Naive thymus-derived CD4-positive, alpha-beta T cell (primary cell): ENCODE measurements at regions of chr3 and their contacts with region 1.

Region 1: GRCh38 chr3:5194341-5195159 is 7.0 kb downstream of the EDEM1 start:
- DNase-seq: peak in 1 of 9 donors; percentile 69
- ATAC-seq: peak; percentile 54
- H3K4me3 ChIP-seq: no peak overlapping the region
- H3K4me3 Mint-ChIP-seq: peak overlapping the region; percentile 2 to 78 (median 46)
- H3K27ac ChIP-seq: peak overlapping the region; percentile 64
- H3K27ac Mint-ChIP-seq: peak overlapping the region; percentile 63 to 96 (median 93)
- H3K4me1 ChIP-seq: peaks cover 76 to 88% of the 10 kb centered on the region in 2 donors
- H3K4me1 Mint-ChIP-seq: peaks cover 73 to 90% (median 87%) of the 10 kb centered on the region in 7 donors
- H3K27me3 ChIP-seq: no peaks in the 10 kb centered on the region
- H3K27me3 Mint-ChIP-seq: no peaks in the 10 kb centered on the region

Region 2: DNA sequence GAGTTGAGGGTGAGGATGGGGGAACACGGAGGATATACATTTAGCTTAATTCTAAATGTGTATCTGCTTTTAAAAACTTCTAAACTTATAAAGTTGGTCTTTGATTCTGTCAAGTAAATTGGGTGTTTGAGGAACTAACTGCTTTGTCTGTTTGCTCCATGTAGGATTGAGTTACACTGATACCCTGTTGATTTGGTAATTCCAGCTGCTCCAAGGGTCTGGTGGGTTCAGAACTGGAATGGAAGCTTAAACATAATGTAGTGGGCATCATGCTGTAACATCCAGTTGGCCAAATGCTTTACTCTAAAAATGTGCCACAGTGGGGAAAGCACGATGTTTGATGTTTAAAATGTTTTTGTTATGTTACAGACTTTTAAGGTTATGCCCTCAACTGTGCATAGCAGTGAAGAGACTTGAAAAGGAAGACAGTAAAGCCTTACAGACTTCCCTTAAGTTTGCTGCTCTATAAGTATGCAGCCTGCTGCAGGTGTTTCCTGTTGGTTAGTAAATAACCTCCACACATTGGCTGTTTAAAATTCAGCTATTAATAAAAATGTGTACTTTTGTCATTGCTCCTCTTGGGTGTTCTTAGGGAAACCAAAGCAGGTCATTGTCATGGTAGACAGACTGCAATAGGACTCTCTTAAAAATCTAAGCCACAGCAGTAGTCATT is 12.9 kb before region 1 on chr3:
- CTCF ChIA-PET with region 1: interaction called, 19 read pairs
- POLR2A ChIA-PET with region 1: interaction called, 117 read pairs
- intact Hi-C with region 1: no loop called
- DNase-seq: no peak
- ATAC-seq: peak; percentile 59
- H3K4me3 ChIP-seq: no peak overlapping the region
- H3K4me3 Mint-ChIP-seq: peak overlapping the region in 1 of 10 donors; percentile 25
- H3K27ac ChIP-seq: no peak overlapping the region
- H3K27ac Mint-ChIP-seq: peak overlapping the region in 7 of 9 donors; percentile 55 to 89 (median 73)
- H3K4me1 ChIP-seq: peaks cover 0 to 8% of the 10 kb centered on the region in 2 donors
- H3K4me1 Mint-ChIP-seq: peaks cover 5 to 39% (median 31%) of the 10 kb centered on the region in 7 donors
- H3K27me3 ChIP-seq: no peaks in the 10 kb centered on the region
- H3K27me3 Mint-ChIP-seq: no peaks in the 10 kb centered on the region

Region 3: DNA sequence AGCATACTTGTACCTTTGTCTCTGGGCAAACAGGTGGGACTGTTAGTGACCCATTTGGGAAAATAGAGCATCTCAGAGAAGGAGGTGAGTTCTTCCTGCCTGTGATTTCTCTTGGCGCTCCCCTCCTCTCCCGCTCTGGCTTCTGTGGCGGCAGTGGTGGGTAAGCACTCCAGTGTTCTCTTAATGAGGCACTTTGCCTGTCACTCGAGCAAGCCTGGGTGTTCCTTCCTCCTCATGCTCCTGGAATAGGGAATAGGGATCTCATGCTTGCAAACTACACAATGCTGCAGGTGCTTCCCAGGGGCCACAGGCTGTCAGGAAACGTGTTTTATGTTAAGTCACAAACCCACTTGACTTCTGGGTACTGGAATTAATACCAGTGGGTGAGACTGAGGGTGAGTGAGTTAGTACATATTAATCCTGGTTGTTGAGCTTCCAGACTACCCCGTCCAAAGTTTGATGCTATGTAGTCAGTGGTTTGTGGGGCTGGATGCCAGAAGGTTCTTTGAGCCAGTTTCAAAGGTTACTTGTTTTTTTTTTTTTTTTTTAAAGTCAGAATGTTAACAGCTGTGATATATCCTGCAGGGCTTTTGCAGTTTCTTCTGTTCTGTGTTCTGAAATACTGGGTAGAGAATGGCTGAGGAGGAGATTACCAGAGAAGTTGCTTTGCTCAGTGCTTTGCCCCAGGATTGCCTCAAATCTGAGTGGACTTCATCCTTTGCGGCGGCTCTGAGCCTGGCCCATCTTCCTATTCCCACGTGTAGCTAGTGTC is 23.5 kb after region 1 on chr3:
- CTCF ChIA-PET with region 1: interaction called, 3 read pairs
- POLR2A ChIA-PET with region 1: interaction called, 3 read pairs
- intact Hi-C with region 1: loop called in 1 of 2 experiments (anchors 2 kb)
- DNase-seq: no peak
- ATAC-seq: no peak
- H3K4me3 ChIP-seq: no peak overlapping the region
- H3K4me3 Mint-ChIP-seq: no peak overlapping the region
- H3K27ac ChIP-seq: peak overlapping the region; percentile 16
- H3K27ac Mint-ChIP-seq: peak overlapping the region; percentile 32 to 75 (median 65)
- H3K4me1 ChIP-seq: no peaks in the 10 kb centered on the region
- H3K4me1 Mint-ChIP-seq: peaks cover 0 to 12% (median 5%) of the 10 kb centered on the region in 7 donors
- H3K27me3 ChIP-seq: no peaks in the 10 kb centered on the region
- H3K27me3 Mint-ChIP-seq: no peaks in the 10 kb centered on the region

Region 4: GRCh38 chr3:5264087-5264600 is 69.6 kb after region 1 on chr3:
- CTCF ChIA-PET with region 1: no interaction called
- POLR2A ChIA-PET with region 1: no interaction called
- intact Hi-C with region 1: loop called in 1 of 2 experiments (anchors 5 kb)
- DNase-seq: no peak
- ATAC-seq: no peak
- H3K4me3 ChIP-seq: no peak overlapping the region
- H3K4me3 Mint-ChIP-seq: no peak overlapping the region
- H3K27ac ChIP-seq: no peak overlapping the region
- H3K27ac Mint-ChIP-seq: peak overlapping the region in 1 of 9 donors; percentile 16
- H3K4me1 ChIP-seq: peaks cover 0 to 7% of the 10 kb centered on the region in 2 donors
- H3K4me1 Mint-ChIP-seq: peaks cover 0 to 20% (median 14%) of the 10 kb centered on the region in 7 donors
- H3K27me3 ChIP-seq: no peaks in the 10 kb centered on the region
- H3K27me3 Mint-ChIP-seq: peaks cover 0 to 2% (median 0%) of the 10 kb centered on the region in 5 donors